ENCODE measurements at regions of chr7 and their contacts with region 1.

Region 1: GRCh38 chr7:2266908-2267307 is 24.9 kb downstream of the NUDT1 start:
- DNase-seq: peak; percentile 93 to 96
- H3K4me3 ChIP-seq: no peak overlapping the region
- H3K27ac ChIP-seq: peak overlapping the region; percentile 86
- H3K4me1 ChIP-seq: peaks cover 41% of the 10 kb centered on the region
- H3K27me3 ChIP-seq: no peaks in the 10 kb centered on the region
- CTCF ChIP-seq: no peak

Region 2: GRCh38 chr7:2248984-2249694 is 17.8 kb before region 1 on chr7:
- CTCF ChIA-PET with region 1: no interaction called
- POLR2A ChIA-PET with region 1: no interaction called
- intact Hi-C with region 1: loop called (anchors 2 kb)
- DNase-seq: peak; percentile 88 to 95
- H3K4me3 ChIP-seq: peak overlapping the region; percentile 5; the same call in 1 of the 2 replicates
- H3K27ac ChIP-seq: peak overlapping the region; percentile 83
- H3K4me1 ChIP-seq: peaks cover 40% of the 10 kb centered on the region
- H3K27me3 ChIP-seq: no peaks in the 10 kb centered on the region
- CTCF ChIP-seq: no peak

Region 3: GRCh38 chr7:2307611-2308107 is 40.8 kb after region 1 on chr7:
- CTCF ChIA-PET with region 1: no interaction called
- POLR2A ChIA-PET with region 1: interaction called, 3 read pairs
- intact Hi-C with region 1: loop called (anchors 2 kb)
- DNase-seq: no peak
- H3K4me3 ChIP-seq: no peak overlapping the region
- H3K27ac ChIP-seq: no peak overlapping the region
- H3K4me1 ChIP-seq: no peaks in the 10 kb centered on the region
- H3K27me3 ChIP-seq: no peaks in the 10 kb centered on the region
- CTCF ChIP-seq: no peak

Region 4: DNA sequence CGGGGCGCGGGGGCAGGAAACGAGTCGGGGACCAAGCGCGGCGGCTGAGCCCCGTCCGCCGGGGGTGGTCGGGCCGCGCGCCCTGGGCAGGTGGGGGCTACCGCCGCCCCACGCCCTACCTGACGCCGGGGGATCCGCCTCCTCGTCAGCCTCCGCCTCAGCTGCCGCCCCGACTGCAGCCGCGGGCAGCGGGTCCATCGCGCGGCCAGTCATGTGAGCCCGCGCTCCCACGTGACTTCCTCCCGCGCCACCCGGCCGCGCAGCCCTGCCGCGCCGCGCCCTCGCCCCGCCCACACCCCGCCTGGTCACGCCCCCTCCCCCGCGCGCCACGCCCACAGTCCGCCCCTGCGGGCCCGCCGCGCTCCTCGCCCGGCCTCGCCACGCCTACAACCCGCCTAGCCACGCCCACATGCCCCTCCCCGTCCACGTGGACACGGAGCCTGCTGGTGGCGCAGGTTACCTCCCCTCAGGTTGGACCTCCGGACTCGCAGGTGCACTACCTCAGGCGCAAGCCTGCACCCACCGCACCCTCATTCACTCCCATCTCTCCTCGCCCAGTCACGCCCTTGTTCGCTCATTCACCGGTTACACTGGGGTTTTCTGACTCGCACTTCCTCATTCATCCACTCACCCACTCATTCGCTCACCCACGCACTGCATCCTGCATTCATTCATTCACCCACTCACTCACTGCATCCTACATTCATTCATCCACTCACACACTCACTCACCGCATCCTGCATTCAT is 47.5 kb after region 1 on chr7 and contains the start of gene SNX8:
- CTCF ChIA-PET with region 1: interaction called, 4 read pairs
- POLR2A ChIA-PET with region 1: no interaction called
- intact Hi-C with region 1: loop called (anchors 1 kb)
- DNase-seq: peak; percentile 87 to 100
- H3K4me3 ChIP-seq: peak within 1 kb of the TSS; percentile 72
- H3K27ac ChIP-seq: no peak within 1 kb of the TSS
- H3K4me1 ChIP-seq: 0 out of 2 replicates have a peak, but pooled peaks cover 4% of the 10 kb centered on the region
- H3K27me3 ChIP-seq: no peaks in the 10 kb centered on the region
- CTCF ChIP-seq: no peak
- total RNA-seq, gene SNX8: 73.9 and 102 TPM in 2 replicates

Region 5: DNA sequence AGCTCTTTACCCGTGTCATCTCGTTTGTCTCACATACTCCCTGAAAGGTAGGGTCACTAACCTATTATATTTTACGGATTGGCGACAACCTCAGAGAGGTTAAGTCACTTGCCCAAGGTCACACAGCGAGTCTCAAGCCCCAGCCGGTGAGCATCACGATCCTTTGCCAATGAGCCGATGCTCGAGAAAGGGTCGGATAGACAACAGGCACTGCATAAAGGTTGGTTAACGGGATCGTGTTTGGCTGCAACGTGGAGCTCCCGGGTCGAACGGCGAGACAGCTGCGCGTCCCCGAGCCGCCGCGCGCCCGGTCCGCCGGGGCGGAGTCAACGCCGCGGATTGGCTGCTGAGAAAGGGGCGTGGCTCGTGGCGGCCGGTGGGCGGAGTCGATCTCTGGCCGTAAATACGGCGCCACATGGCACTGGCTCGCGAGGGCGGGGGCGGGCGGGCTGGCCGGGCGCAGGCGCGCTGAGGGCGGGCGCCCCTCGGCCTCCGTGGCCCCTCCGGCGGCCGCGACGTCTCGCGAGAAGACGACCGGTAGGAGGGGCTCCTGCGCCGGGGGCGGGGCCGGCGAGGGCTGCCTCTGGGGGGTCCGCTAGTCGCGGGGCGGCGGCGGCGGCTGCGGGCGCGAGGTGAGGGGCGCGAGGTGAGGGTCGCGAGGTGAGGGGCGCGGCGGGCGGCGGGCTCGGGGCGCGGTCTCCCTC is 136.3 kb after region 1 on chr7 and contains the start of gene CHST12:
- CTCF ChIA-PET with region 1: no interaction called
- POLR2A ChIA-PET with region 1: no interaction called
- intact Hi-C with region 1: no loop called
- DNase-seq: peak; percentile 79 to 98
- H3K4me3 ChIP-seq: peak within 1 kb of the TSS; percentile 74
- H3K27ac ChIP-seq: no peak within 1 kb of the TSS
- H3K4me1 ChIP-seq: peaks cover 29% of the 10 kb centered on the region
- H3K27me3 ChIP-seq: no peaks in the 10 kb centered on the region
- CTCF ChIP-seq: no peak
- total RNA-seq, gene CHST12: 25.9 and 41.1 TPM in 2 replicates

Measured in PC-9 (cell line).